Activated naive CD4-positive, alpha-beta T cell treated with anti-CD3 and anti-CD28 coated beads for 36 hours (primary cell): ENCODE measurements at regions of chr15 and their contacts with region 1.

Region 1: GRCh38 chr15:31977812-31978661 is 52.3 kb upstream of the CHRNA7 start:
- DNase-seq: peak; percentile 64
- H3K4me3 Mint-ChIP-seq: no peak overlapping the region
- H3K27ac Mint-ChIP-seq: no peak overlapping the region
- H3K4me1 Mint-ChIP-seq: peaks cover 7% of the 10 kb centered on the region
- H3K27me3 Mint-ChIP-seq: peaks cover 28% of the 10 kb centered on the region

Region 2: DNA sequence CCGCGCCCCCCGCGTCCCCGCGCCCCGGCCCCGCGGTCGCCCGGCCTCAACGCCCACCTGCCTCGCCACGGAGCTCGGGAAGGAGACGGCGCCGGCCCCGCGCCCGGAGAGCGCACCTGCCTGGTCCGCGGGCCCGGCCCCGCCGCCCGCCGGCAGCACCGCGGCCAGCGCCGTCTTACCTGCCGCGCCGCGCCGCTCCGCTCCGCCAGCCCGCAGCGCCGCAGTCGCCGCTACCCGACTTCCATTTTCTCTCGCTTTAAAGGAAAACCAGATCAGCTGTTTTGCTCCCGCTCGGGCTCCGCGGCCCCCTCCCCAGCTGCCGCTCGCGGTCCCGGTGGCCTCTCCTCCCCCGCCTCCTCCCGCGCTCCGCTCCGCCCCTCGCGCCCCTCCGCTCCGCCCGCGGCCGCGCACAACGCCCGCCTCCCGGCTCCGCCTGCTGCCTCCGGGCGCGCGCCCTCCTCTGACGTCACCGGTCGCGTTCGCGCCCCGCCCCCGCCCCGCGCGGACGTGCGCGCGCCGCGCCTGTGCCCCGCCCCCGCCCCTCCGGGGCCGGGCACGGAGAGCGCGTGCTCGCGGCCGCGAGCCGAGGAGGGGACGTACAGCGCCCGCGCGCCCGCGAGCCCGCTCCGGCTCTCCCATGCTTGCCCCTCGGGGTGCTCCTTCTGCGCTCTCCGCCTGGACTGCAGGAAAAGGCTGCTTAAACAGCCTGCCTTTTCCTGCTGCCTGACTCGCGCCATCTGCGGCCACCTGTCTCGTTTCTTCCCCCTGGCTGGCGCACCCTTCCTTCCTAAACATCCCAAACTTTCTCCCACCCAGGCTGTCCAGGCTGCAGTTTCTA is 107.5 kb before region 1 on chr15:
- CTCF ChIA-PET with region 1: no interaction called
- intact Hi-C with region 1: loop called (anchors 1 kb)
- DNase-seq: peak; percentile 78
- H3K4me3 Mint-ChIP-seq: peak within 1 kb of the TSS; percentile 87
- H3K27ac Mint-ChIP-seq: peak within 1 kb of the TSS; percentile 80
- H3K4me1 Mint-ChIP-seq: peaks cover 9% of the 10 kb centered on the region
- H3K27me3 Mint-ChIP-seq: peaks cover 8% of the 10 kb centered on the region

Region 3: GRCh38 chr15:31964586-31965307 is 13.3 kb before region 1 on chr15:
- CTCF ChIA-PET with region 1: interaction called, 10 read pairs
- intact Hi-C with region 1: no loop called
- DNase-seq: no peak
- H3K4me3 Mint-ChIP-seq: no peak overlapping the region
- H3K27ac Mint-ChIP-seq: no peak overlapping the region
- H3K4me1 Mint-ChIP-seq: no peaks in the 10 kb centered on the region
- H3K27me3 Mint-ChIP-seq: peaks cover 12% of the 10 kb centered on the region

Region 4: GRCh38 chr15:32130823-32131222 is 152.8 kb after region 1 on chr15:
- CTCF ChIA-PET with region 1: no interaction called
- intact Hi-C with region 1: no loop called
- DNase-seq: no peak
- H3K4me3 Mint-ChIP-seq: no peak overlapping the region
- H3K27ac Mint-ChIP-seq: no peak overlapping the region
- H3K4me1 Mint-ChIP-seq: no peaks in the 10 kb centered on the region
- H3K27me3 Mint-ChIP-seq: peaks cover 27% of the 10 kb centered on the region